Activated CD8-positive, alpha-beta T cell treated with anti-CD3 and anti-CD28 coated beads for 36 hours (primary cell): ENCODE measurements at regions of chr2 and their contacts with region 1.

Region 1: DNA sequence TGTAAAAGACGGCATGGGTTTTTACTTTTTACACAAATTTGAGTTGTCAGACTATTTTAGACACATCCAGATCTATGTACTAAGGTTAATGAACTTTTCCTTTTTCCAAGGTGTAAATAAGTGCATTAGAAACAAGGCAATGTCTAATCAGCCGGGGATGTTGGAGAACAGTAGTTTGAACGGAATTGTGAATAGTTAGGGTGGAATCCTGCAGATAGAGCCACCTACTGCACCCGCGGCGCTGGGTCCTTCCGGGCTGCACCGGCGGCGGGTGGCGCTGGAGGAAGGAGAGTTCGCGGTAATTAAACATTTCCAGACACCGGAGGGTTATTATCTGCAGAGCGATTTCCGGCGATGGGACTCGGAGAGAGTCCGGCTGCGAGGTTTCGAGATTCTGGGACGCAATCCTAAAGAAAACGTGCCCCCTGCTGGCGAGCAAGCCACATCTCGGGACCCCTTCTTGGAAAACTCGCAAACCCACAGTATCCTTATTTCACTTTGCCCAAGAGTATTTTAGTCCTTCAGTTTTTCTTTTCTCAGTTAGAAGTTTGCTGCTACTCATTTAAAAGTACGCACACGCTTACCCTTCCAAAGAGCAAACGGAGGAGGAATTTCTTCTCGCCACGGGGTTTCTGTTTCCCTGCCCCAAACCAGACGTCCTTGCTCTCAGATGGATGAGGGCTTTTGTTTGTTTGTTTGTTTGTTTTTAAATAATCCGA is 4.5 kb upstream of the OSR1 start:
- DNase-seq: peak; percentile 71
- ATAC-seq: peak; percentile 67
- H3K4me3 Mint-ChIP-seq: peak overlapping the region; percentile 86
- H3K27ac Mint-ChIP-seq: no peak overlapping the region
- H3K4me1 Mint-ChIP-seq: peaks cover 24% of the 10 kb centered on the region
- H3K27me3 Mint-ChIP-seq: peaks cover 53% of the 10 kb centered on the region
- CTCF ChIP-seq: no peak

Region 2: GRCh38 chr2:18455236-18455862 is 907.6 kb before region 1 on chr2:
- CTCF ChIA-PET with region 1: no interaction called
- POLR2A ChIA-PET with region 1: no interaction called
- intact Hi-C with region 1: no loop called
- DNase-seq: no peak
- ATAC-seq: no peak
- H3K4me3 Mint-ChIP-seq: no peak overlapping the region
- H3K27ac Mint-ChIP-seq: no peak overlapping the region
- H3K4me1 Mint-ChIP-seq: no peaks in the 10 kb centered on the region
- H3K27me3 Mint-ChIP-seq: peaks cover 4% of the 10 kb centered on the region
- CTCF ChIP-seq: no peak

Region 3: DNA sequence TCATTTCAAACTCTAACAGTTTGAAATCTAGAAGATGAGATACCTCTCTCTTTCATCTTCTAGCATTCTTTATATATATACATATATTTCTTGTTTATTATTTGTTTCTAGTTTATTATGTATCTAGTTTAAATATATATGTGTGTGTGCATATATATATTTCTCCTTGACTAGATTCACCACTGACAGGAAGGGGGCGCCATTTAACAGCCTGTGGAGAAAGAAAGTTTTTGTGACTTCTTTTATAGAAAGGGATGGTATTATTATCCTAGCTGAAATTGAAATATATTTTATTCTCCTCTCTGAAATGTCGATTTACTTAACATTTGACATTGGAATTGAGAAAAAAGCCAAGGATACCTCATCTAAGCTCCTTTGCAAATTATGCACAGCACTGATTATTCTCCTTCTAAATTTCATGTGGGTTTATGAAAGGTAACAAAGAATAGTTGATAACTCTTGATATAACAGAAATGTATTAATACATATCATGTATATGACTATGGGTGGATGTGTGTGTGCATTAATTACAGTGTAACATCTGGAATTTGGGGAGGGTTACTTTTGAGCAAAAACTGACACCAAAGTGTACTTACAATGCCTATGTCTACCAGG is 612.9 kb before region 1 on chr2:
- CTCF ChIA-PET with region 1: no interaction called
- POLR2A ChIA-PET with region 1: no interaction called
- intact Hi-C with region 1: loop called (anchors 5 kb)
- DNase-seq: peak; percentile 67
- ATAC-seq: no peak
- H3K4me3 Mint-ChIP-seq: no peak overlapping the region
- H3K27ac Mint-ChIP-seq: no peak overlapping the region
- H3K4me1 Mint-ChIP-seq: no peaks in the 10 kb centered on the region
- H3K27me3 Mint-ChIP-seq: no peaks in the 10 kb centered on the region
- CTCF ChIP-seq: peak; percentile 82

Region 4: DNA sequence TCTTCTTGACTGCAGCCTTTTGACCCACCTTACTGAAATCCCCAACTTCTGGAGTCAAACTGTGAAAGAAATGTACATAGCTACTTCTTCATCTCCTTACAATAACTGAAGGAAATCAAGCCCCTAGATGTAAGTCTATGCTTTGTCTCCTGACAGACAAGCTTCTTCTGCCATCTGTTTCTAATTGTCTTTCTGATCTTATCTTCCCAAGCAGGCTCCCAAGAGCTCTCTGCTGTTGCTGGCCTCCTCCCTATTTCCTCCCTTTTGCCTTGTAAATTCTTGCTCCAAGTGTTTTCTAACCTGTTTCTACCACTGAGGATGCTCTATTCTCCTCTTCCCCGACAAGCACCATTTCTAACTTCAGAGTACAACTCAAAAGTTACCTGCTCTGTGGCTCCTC is 72.9 kb after region 1 on chr2:
- CTCF ChIA-PET with region 1: no interaction called
- POLR2A ChIA-PET with region 1: no interaction called
- intact Hi-C with region 1: no loop called
- DNase-seq: no peak
- ATAC-seq: no peak
- H3K4me3 Mint-ChIP-seq: no peak overlapping the region
- H3K27ac Mint-ChIP-seq: no peak overlapping the region
- H3K4me1 Mint-ChIP-seq: no peaks in the 10 kb centered on the region
- H3K27me3 Mint-ChIP-seq: peaks cover 16% of the 10 kb centered on the region
- CTCF ChIP-seq: no peak